ENCODE measurements at regions of chr11 and their contacts with region 1.

Region 1: DNA sequence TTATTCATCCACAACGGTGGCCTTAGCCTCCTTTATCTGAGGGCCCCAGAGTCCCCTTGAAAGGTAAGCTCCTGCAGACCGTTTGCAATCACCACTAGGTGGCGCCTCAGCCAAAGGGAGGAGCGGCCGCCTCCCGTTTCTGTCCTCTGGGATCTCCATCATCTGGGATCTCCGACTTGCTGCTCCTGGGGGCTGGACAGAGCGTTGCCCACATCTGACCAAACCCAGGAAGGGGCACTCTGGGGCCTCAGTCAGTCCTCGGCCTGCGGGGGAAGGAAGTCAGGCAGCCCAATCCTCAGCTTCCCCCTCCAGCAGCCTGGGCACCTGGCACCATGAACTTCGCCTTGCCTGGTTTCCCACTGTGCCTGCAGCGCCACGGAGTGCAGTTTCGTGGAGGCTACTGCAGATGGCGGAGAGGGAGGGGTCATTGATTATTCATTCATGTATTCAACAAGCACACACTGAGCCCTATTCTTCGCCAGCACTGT is 23.5 kb downstream of the TP53I11 start:
- DNase-seq: peak; percentile 79
- H3K4me3 Mint-ChIP-seq: no peak overlapping the region
- H3K27ac Mint-ChIP-seq: no peak overlapping the region
- H3K4me1 Mint-ChIP-seq: peaks cover 5% of the 10 kb centered on the region
- H3K27me3 Mint-ChIP-seq: peaks cover 34% of the 10 kb centered on the region
- CTCF ChIP-seq: peak; percentile 84

Region 2: DNA sequence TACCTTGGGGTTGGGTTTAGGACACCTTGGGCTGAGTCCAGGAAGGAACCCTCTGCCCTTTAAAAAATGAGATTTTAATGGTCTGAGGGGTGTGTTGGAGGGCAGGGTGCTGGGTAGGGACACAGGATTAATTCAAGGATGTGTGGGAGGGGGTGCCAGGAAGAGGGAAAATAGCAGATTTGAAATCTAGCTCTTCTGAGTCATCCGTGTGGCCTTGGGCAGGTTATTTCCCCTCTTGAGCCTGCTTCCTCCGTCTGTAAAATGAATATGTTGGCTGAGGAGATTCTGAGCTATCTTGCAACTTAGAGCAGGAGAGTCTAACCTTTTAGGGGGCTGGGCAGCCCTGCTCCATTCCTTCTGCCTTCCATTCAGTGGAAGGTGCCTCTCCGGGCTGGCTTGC is 197.5 kb before region 1 on chr11:
- CTCF ChIA-PET with region 1: no interaction called
- POLR2A ChIA-PET with region 1: no interaction called
- intact Hi-C with region 1: no loop called
- DNase-seq: peak; percentile 63
- H3K4me3 Mint-ChIP-seq: no peak overlapping the region
- H3K27ac Mint-ChIP-seq: no peak overlapping the region
- H3K4me1 Mint-ChIP-seq: no peaks in the 10 kb centered on the region
- H3K27me3 Mint-ChIP-seq: peaks cover 33% of the 10 kb centered on the region
- CTCF ChIP-seq: no peak

Region 3: GRCh38 chr11:44911029-44911814 is 16.0 kb before region 1 on chr11:
- CTCF ChIA-PET with region 1: interaction called, 17 read pairs
- POLR2A ChIA-PET with region 1: no interaction called
- intact Hi-C with region 1: no loop called
- DNase-seq: peak; percentile 82
- H3K4me3 Mint-ChIP-seq: no peak overlapping the region
- H3K27ac Mint-ChIP-seq: no peak overlapping the region
- H3K4me1 Mint-ChIP-seq: no peaks in the 10 kb centered on the region
- H3K27me3 Mint-ChIP-seq: no peaks in the 10 kb centered on the region
- CTCF ChIP-seq: peak; percentile 79

Region 4: GRCh38 chr11:44916801-44917385 is 10.3 kb before region 1 on chr11:
- CTCF ChIA-PET with region 1: interaction called, 12 read pairs
- POLR2A ChIA-PET with region 1: no interaction called
- intact Hi-C with region 1: no loop called
- DNase-seq: no peak
- H3K4me3 Mint-ChIP-seq: no peak overlapping the region
- H3K27ac Mint-ChIP-seq: no peak overlapping the region
- H3K4me1 Mint-ChIP-seq: no peaks in the 10 kb centered on the region
- H3K27me3 Mint-ChIP-seq: peaks cover 30% of the 10 kb centered on the region
- CTCF ChIP-seq: no peak

Region 5: DNA sequence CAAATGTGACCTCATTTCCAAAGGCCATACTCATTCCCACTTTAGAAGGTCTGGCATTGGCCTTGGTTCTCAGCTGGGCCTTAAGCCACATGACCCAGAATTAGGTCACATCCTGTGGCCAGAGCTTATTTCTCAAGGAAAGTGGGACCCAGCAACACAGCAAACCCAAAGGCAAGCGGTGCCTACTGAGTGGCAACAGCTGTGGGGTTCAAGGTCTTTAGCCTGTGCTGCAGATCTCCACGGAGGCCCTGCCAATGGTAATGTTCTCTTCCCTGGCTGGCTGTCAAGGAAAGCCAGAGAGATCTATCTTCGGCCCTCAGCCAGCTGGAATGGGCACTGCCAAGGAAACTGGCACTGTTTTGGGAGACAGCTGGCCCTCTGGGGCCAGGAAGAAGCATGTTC is 65.0 kb after region 1 on chr11:
- CTCF ChIA-PET with region 1: no interaction called
- POLR2A ChIA-PET with region 1: no interaction called
- intact Hi-C with region 1: no loop called
- DNase-seq: no peak
- H3K4me3 Mint-ChIP-seq: no peak overlapping the region
- H3K27ac Mint-ChIP-seq: no peak overlapping the region
- H3K4me1 Mint-ChIP-seq: no peaks in the 10 kb centered on the region
- H3K27me3 Mint-ChIP-seq: peaks cover 12% of the 10 kb centered on the region
- CTCF ChIP-seq: no peak

Region 6: DNA sequence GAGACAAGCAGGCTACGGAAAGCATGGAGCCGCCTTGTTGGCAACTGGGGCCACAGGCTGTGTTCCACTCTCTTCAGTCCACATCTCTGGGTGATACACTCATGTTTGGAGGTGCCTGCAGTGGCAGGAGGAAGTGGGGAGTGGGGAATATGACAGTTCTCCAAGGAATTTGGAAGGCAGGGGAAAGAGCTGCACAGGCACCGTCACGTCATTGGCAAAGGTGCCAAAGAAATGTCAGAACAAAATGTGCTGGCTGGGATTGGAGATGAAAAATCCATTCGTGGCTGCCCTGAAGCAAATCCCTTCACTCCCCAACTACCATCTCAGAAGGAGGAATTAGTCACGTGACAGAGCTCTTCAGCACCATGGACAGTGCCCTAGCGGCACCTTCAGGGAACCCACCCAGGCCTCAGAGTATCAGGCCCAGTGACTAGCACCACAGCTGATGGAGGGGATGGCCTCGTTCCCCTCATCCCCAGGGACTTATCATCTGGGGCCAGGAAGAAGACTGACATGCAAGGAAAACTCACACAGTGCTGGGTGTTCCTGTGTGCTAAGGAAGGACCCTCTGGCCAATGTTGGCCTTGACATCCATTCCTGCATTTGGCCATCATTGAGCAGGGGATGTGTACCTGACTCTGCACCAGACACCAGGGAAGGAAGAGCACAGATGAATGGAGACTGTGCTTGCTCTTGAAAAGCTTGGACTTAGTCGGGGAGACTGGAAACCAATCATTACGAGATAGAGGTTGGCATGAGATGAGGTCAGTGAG is 170.7 kb after region 1 on chr11:
- CTCF ChIA-PET with region 1: interaction called, 1,181 read pairs
- POLR2A ChIA-PET with region 1: interaction called, 36 read pairs
- intact Hi-C with region 1: no loop called
- DNase-seq: peak; percentile 80
- H3K4me3 Mint-ChIP-seq: no peak overlapping the region
- H3K27ac Mint-ChIP-seq: no peak overlapping the region
- H3K4me1 Mint-ChIP-seq: peaks cover 42% of the 10 kb centered on the region
- H3K27me3 Mint-ChIP-seq: no peaks in the 10 kb centered on the region
- CTCF ChIP-seq: no peak

Region 7: DNA sequence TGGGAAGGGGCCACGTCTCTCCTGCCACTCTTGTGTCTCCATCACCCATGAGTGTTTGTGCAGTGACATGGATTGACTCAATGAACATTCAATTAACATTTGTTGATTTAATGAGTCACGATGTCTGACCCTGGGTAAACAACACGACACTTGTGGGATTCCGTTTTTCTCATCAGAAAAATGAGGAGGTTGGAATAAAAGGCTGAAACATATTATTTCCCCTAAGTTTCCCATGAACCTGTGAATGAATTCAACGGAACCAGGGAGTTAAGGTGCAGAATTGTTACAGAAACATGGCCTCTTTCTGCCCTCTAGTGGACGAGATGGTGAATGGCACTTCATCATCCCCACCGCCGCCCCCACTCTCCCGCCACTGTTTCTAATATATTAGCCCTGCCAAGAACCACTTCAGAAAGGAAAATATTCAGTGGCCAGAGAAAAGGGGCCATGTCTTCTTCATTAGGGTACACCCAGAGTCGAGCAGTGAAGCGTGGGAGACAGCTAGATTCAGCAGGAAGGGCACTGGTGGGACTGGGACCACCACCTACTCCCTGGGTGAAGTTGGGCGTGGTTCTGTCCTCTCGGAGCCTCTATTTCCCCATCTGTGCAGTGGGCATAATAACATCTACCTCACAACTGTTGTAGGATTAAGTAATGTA is 405.2 kb after region 1 on chr11:
- CTCF ChIA-PET with region 1: interaction called, 15 read pairs
- POLR2A ChIA-PET with region 1: no interaction called
- intact Hi-C with region 1: loop called (anchors 5 kb)
- DNase-seq: peak; percentile 52
- H3K4me3 Mint-ChIP-seq: no peak overlapping the region
- H3K27ac Mint-ChIP-seq: no peak overlapping the region
- H3K4me1 Mint-ChIP-seq: peaks cover 6% of the 10 kb centered on the region
- H3K27me3 Mint-ChIP-seq: peaks cover 20% of the 10 kb centered on the region
- CTCF ChIP-seq: peak; percentile 84